Prostate gland (tissue), 2 donors: ENCODE measurements at regions of chr3 and their contacts with region 1.

Region 1: DNA sequence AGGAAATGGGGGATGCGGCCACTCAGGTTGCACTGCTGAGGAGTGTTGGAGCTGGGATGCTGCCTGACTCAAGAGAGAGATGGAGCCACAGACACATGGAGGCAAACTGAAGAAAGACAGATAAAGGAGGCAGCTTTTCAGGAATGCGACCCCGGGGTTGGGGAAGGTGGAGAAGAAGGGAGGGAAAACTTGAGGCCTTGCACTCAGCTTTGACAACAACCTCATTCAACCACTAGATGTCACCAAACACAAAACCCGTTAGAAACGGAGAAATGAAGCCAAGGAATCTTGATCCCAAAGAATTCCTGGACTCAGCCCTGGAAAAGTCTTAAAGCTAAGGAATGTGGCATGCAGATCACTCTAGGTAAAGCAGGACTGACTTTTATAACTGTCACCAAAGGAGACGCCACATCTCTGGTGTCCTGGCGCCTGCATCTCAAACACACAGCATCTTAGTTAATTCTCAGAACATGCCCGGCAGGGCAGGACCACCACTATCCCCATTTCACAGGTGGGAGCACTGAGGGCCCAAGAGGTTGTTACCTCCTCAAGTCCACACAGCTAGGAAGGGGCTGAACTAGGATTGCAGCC is 59.6 kb upstream of the LMCD1 start:
- DNase-seq: peak; percentile 19
- H3K4me3 ChIP-seq: no peak overlapping the region
- H3K27ac ChIP-seq: no peak overlapping the region
- H3K4me1 ChIP-seq: peaks cover 13% of the 10 kb centered on the region
- H3K27me3 ChIP-seq: no peaks in the 10 kb centered on the region
- CTCF ChIP-seq: peak; percentile 51 to 81 (median 76)
- POLR2A ChIP-seq: no peak

Region 2: DNA sequence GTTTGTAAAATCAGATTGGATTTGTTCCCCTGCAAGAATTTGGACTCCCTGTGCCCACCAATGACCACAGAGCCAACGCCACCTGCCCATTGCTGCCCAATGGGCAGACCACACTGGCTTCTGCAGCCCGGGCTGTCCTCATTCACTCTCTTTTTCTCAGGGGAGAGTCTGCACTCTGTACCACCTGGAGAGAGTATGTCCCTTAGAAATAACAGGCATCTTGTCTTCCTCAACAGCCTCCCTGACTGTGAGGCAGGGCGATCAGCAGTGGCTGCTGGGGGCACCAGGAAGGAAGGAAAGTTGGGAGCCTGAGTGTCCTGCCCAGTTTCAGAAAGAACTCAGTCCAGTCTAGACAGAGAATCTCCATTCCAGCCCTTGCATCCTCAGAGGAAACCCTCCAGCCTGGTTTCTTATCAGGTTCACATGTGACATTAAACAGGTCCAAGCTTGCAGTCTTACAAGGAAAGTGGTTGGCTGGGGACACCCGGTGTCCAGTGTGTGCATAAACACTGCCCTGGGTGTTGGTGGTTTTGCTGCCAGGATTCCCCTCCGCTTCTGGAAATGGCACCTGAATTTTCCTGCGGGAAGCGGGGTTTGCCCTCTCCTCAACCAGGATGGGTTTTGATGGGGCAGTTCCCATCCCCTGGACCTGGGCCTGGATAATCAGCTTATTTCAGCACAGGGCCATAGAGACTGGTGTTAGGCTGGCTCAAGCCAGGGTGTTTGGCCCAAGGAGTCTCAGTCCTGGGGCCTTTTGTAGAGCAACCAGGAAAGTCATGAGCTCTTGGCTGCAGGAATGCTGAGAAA is 165.4 kb after region 1 on chr3:
- intact Hi-C with region 1: loop called (anchors 5 kb)
- DNase-seq: peak; percentile 73
- H3K4me3 ChIP-seq: no peak overlapping the region
- H3K27ac ChIP-seq: no peak overlapping the region
- H3K4me1 ChIP-seq: no peaks in the 10 kb centered on the region
- H3K27me3 ChIP-seq: no peaks in the 10 kb centered on the region
- CTCF ChIP-seq: peak in 3 of 4 experiments; percentile 63 to 83 (median 79)
- POLR2A ChIP-seq: no peak

Region 3: DNA sequence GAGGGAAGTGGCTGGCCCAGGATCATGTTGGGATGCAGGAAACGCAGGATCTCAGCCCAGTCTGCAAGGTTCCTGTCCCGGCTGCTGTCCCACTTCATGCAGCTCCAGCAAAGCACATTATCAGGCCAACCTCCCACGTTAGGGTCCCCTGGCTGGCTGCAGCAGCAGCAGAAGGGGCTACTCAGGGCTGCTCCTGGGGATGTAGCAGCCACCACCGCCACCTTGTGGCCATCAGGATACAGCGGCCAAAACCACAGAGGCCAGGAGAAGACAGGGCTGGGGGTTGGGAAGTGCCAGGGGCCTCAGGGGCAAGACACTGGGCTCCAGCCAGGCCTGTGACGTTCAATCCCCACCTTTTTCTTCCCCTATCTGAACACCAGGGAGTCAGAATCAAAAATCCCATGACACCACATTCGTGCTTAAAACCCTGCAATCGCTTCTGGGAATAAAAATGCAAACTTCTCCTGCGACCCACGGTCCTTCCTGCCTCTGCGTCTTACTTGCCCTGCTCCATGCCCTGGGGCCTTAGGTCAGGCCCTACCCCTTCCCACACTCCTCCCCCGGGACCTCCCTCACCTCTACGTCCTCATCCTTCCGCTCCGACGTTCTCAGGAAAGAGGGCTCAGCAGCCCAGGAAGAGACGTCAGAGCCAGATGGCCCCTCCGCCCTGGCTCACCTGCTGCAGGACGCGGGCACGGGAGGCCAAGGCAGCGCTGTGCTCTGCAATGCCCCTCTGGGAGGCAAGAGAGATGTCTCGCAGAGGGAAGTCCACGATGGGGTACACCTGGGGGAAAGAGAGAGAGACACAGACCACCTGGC is 181.0 kb after region 1 on chr3:
- intact Hi-C with region 1: loop called (anchors 1 kb)
- DNase-seq: peak; percentile 66
- H3K4me3 ChIP-seq: no peak overlapping the region
- H3K27ac ChIP-seq: no peak overlapping the region
- H3K4me1 ChIP-seq: no peaks in the 10 kb centered on the region
- H3K27me3 ChIP-seq: no peaks in the 10 kb centered on the region
- CTCF ChIP-seq: peak; percentile 66 to 90 (median 86)
- POLR2A ChIP-seq: no peak